GM12878 (cell line): ENCODE measurements at regions of chr9 and their contacts with region 1.

Region 1: GRCh38 chr9:77456829-77457437 is 191.2 kb downstream of the GNA14 start:
- DNase-seq: no peak
- ATAC-seq: peak; percentile 91
- H3K4me3 ChIP-seq: no peak overlapping the region
- H3K27ac ChIP-seq: no peak overlapping the region
- H3K4me1 ChIP-seq: no peaks in the 10 kb centered on the region
- H3K27me3 ChIP-seq: no peaks in the 10 kb centered on the region; a peak in 2 of 4 replicates
- CTCF ChIP-seq: peak; percentile 79 to 94 (median 90)
- EP300 ChIP-seq: no peak
- POLR2A ChIP-seq: no peak
- RAD21 ChIP-seq: peak; percentile 47

Region 2: GRCh38 chr9:77433675-77434445 is 23.1 kb before region 1 on chr9:
- CTCF ChIA-PET with region 1: interaction called, 42 read pairs
- POLR2A ChIA-PET with region 1: no interaction called
- RAD21 ChIA-PET with region 1: interaction called, 5 read pairs
- SMC1A ChIA-PET with region 1: interaction called, 14 read pairs
- in situ Hi-C with region 1: no loop called
- intact Hi-C with region 1: no loop called
- DNase-seq: no peak
- ATAC-seq: peak; percentile 96
- H3K4me3 ChIP-seq: no peak overlapping the region
- H3K27ac ChIP-seq: no peak overlapping the region
- H3K4me1 ChIP-seq: no peaks in the 10 kb centered on the region
- H3K27me3 ChIP-seq: no peaks in the 10 kb centered on the region
- CTCF ChIP-seq: peak; percentile 80 to 94 (median 88)
- EP300 ChIP-seq: no peak
- POLR2A ChIP-seq: no peak
- RAD21 ChIP-seq: peak; percentile 88

Region 3: DNA sequence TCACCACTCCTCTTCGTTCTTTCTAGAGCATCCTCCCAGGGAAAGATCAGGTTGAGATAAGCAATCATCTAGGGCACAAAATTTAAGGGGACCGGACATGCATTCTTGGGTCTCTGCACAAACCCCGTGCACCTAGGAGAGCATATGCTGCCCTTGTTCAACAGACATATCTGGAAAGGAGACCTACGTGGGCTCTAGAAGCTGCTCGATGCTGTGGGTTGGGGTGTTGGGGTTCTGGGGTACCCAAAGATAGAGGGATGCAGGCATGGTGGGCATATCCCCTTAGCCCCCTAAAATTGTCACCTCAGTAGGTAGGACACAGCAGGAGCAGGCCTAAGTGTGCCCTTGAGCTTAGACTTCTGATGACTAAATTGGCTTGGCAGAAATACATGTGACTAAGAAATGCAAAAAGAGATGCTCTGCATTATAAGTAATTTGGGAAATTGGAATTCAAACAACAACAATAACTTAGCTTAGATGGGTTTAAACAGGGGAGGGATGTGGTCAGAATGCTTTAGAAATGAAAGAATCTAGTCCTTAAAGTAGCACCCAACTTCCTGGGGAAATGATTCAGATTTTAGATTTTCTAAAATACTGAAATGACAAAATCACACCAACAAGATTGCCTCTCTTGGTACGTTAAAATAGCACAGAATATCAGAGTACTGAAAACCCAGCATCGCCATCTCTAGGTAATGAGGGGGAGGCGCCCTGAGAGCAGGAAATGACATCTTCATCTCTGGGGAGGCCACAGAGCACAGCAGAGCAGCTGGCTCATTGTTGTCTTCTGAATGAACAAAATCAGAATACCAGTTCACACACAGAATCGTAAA is 18.9 kb after region 1 on chr9:
- CTCF ChIA-PET with region 1: interaction called, 12 read pairs
- POLR2A ChIA-PET with region 1: no interaction called
- RAD21 ChIA-PET with region 1: interaction called, 6 read pairs
- SMC1A ChIA-PET with region 1: interaction called, 7 read pairs
- in situ Hi-C with region 1: no loop called
- intact Hi-C with region 1: no loop called
- DNase-seq: no peak
- ATAC-seq: peak; percentile 98
- H3K4me3 ChIP-seq: no peak overlapping the region
- H3K27ac ChIP-seq: no peak overlapping the region
- H3K4me1 ChIP-seq: no peaks in the 10 kb centered on the region
- H3K27me3 ChIP-seq: no peaks in the 10 kb centered on the region
- CTCF ChIP-seq: no peak
- EP300 ChIP-seq: no peak
- POLR2A ChIP-seq: no peak
- RAD21 ChIP-seq: no peak

Region 4: DNA sequence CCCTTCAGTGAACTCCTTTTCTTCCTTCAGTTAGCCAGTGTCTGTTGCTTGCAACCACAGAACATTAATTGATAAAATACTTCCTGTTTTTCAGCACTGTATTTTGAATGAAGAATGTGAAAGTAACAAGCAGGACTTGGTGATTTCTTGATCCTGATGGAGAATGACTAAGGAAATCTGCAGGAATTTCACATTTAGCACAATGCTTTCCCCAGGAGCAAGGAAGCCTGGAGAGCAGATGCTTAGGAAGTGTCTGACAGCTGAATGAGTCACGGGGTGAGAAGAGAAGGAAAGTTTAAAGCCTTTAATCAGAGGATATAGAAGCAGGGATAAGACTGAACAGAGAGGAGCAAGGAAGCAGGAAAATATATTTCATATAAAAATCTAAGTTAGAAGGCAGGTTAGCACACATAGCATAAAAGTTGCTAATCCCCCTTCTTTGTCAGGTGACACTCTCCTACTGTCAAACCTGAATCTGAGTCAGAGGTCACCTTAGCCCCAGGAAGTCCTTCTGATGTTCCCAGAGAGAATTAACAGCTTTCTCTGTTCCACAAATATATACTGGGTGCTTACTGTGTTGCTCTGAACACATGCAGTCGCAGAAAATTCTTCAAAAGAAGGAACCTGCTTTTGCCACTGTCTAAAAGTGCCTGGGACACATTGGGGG is 131.5 kb after region 1 on chr9:
- CTCF ChIA-PET with region 1: no interaction called
- POLR2A ChIA-PET with region 1: no interaction called
- RAD21 ChIA-PET with region 1: no interaction called
- SMC1A ChIA-PET with region 1: interaction called, 3 read pairs
- in situ Hi-C with region 1: no loop called
- intact Hi-C with region 1: loop called (anchors 10 kb)
- DNase-seq: no peak
- ATAC-seq: no peak
- H3K4me3 ChIP-seq: no peak overlapping the region
- H3K27ac ChIP-seq: no peak overlapping the region
- H3K4me1 ChIP-seq: no peaks in the 10 kb centered on the region
- H3K27me3 ChIP-seq: no peaks in the 10 kb centered on the region; a peak in 1 of 4 replicates
- CTCF ChIP-seq: no peak
- EP300 ChIP-seq: no peak
- POLR2A ChIP-seq: no peak
- RAD21 ChIP-seq: no peak

Region 5: DNA sequence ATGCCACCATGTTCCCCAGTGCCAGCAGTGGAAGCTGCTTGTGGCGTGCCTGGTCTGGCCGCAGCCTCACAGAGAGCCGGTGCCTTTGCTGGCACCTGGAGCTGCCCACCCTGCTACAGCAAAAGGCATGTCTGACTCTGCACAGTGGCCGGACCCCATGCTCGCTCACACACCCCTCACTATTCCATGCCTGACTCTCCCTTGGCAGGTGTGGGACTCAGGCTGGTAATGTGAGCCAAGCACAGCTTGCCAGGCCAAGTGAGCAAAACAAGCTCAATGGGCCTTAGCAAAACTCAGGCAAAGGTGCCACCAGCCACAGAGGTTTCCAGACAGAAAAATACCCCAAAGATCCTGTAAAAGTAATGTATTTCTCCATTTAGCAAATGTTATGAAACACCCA is 175.7 kb after region 1 on chr9:
- CTCF ChIA-PET with region 1: no interaction called
- POLR2A ChIA-PET with region 1: no interaction called
- RAD21 ChIA-PET with region 1: no interaction called
- SMC1A ChIA-PET with region 1: no interaction called
- in situ Hi-C with region 1: no loop called
- intact Hi-C with region 1: no loop called
- DNase-seq: no peak
- ATAC-seq: no peak
- H3K4me3 ChIP-seq: no peak overlapping the region
- H3K27ac ChIP-seq: no peak overlapping the region
- H3K4me1 ChIP-seq: no peaks in the 10 kb centered on the region
- H3K27me3 ChIP-seq: no peaks in the 10 kb centered on the region
- CTCF ChIP-seq: no peak
- EP300 ChIP-seq: no peak
- POLR2A ChIP-seq: no peak
- RAD21 ChIP-seq: no peak

Region 6: DNA sequence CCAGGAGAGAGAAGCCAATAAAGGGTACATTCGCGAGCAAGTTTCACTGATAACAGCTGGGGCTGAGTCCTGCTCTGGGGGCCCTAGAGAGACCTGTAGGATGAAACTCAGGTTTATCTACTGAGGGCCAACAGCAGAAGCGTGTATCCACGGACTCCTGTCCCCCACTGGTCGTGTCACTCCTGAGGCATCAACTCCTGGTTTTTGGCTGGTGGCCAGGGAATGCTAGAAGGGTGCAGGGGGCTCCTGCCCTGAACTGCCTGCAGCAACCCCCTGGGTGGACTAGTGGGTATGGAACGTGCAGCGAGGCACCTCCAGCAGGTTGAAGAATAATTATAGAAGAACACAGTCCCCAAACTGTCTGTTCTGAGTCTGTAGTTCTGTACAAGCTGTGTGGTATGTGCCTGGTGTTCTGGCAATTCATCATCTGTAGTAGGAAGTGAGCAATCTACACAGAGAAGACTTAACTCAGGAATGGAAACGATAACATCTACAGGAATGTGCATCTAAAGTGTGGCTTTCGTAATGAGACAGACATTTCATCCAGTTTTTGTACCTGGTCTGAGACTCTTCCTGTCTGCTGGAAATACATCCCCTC is 255.7 kb after region 1 on chr9:
- CTCF ChIA-PET with region 1: no interaction called
- POLR2A ChIA-PET with region 1: no interaction called
- RAD21 ChIA-PET with region 1: no interaction called
- SMC1A ChIA-PET with region 1: no interaction called
- in situ Hi-C with region 1: no loop called
- intact Hi-C with region 1: no loop called
- DNase-seq: no peak
- ATAC-seq: no peak
- H3K4me3 ChIP-seq: no peak overlapping the region
- H3K27ac ChIP-seq: no peak overlapping the region
- H3K4me1 ChIP-seq: no peaks in the 10 kb centered on the region
- H3K27me3 ChIP-seq: no peaks in the 10 kb centered on the region
- CTCF ChIP-seq: no peak
- EP300 ChIP-seq: no peak
- POLR2A ChIP-seq: no peak
- RAD21 ChIP-seq: no peak

Region 7: GRCh38 chr9:78121488-78121887 is 664.6 kb after region 1 on chr9:
- CTCF ChIA-PET with region 1: interaction called, 14 read pairs
- POLR2A ChIA-PET with region 1: no interaction called
- RAD21 ChIA-PET with region 1: interaction called, 5 read pairs
- SMC1A ChIA-PET with region 1: interaction called, 5 read pairs
- in situ Hi-C with region 1: no loop called
- intact Hi-C with region 1: loop called (anchors 5 kb)
- DNase-seq: no peak
- ATAC-seq: peak; percentile 22; the same call in 1 of the 3 replicates
- H3K4me3 ChIP-seq: no peak overlapping the region
- H3K27ac ChIP-seq: no peak overlapping the region
- H3K4me1 ChIP-seq: peaks cover 7% of the 10 kb centered on the region; the same call in 1 of the 2 replicates
- H3K27me3 ChIP-seq: no peaks in the 10 kb centered on the region
- CTCF ChIP-seq: peak; percentile 49 to 57 (median 53)
- EP300 ChIP-seq: no peak
- POLR2A ChIP-seq: no peak
- RAD21 ChIP-seq: peak; percentile 70